Breast epithelium (tissue), 4 donors: ENCODE measurements at regions of chr20 and their contacts with region 1.

Region 1: DNA sequence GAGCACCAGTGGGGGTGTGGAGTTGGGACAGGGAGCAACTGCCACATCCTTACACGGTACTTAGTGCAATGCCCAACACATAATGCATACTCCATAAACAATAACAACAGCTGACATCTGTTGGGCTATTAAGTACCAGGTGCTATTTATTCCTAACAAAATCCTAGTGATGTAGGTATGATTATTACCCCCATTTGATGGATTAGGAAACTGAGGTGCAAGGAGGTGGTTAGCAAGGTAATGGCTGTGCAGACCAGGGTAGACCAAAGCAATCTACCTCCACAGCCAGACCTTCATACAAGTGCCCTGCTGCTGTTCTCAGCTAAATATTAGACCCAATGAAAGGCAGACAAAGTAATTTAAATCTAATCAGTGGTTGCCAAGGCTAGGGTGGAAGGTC is 36.8 kb downstream of the SLC13A3 start:
- DNase-seq: no peak
- H3K4me3 ChIP-seq: no peak overlapping the region
- H3K27ac ChIP-seq: no peak overlapping the region
- H3K4me1 ChIP-seq: no peaks in the 10 kb centered on the region
- H3K27me3 ChIP-seq: no peaks in the 10 kb centered on the region
- CTCF ChIP-seq: no peak
- POLR2A ChIP-seq: no peak

Region 2: DNA sequence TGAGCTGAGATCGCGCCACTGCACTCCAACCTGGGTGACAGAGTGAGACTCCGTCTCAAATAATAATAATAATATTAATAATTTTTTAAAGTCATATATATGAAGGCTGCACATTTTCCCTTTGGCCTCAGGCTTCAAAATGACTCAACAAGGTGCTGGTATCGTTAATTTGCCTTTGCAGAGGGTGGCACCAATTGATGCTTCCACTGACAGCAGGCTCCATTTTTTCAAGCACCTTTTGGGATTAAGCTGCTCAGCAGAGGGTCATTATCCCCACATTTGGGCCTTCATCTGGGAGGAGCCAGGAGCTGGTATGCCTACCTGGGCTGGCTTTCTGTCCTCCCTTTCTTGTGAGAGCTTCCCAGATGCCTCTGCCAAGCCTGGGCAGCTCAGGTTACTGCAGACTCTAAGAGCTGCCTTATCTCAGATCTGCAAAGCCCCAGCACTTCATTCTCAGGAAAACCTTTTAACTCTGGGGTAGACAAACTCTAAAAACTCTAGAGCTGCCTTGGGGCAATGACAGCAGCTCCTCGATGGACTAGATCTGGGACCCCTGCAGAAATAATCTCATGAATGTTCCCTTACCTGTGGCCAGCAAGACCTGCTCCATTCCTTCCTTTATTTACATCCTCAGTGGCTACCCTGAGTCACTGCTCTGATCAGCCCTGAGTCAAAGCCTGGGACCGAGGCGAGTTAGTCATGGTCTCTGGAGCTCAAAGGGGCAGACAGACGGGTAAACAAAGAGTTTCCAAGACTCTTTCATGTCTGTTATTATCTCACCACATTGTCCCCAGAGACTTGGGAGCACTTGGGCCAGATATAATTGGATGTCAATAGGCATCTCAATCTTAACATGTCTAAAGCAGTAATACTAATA is 200.1 kb after region 1 on chr20:
- intact Hi-C with region 1: no loop called
- DNase-seq: no peak
- H3K4me3 ChIP-seq: no peak overlapping the region
- H3K27ac ChIP-seq: no peak overlapping the region
- H3K4me1 ChIP-seq: no peaks in the 10 kb centered on the region
- H3K27me3 ChIP-seq: peaks cover 3 to 5% of the 10 kb centered on the region in 2 donors
- CTCF ChIP-seq: no peak
- POLR2A ChIP-seq: no peak

Region 3: GRCh38 chr20:47509685-47510084 is 895.2 kb after region 1 on chr20:
- intact Hi-C with region 1: loop called (anchors 5 kb)
- DNase-seq: no peak
- H3K4me3 ChIP-seq: no peak overlapping the region
- H3K27ac ChIP-seq: no peak overlapping the region
- H3K4me1 ChIP-seq: peaks cover 0 to 8% of the 10 kb centered on the region in 2 donors
- H3K27me3 ChIP-seq: no peaks in the 10 kb centered on the region
- CTCF ChIP-seq: no peak
- POLR2A ChIP-seq: no peak